ENCODE measurements at regions of chr5 and their contacts with region 1.

Region 1: DNA sequence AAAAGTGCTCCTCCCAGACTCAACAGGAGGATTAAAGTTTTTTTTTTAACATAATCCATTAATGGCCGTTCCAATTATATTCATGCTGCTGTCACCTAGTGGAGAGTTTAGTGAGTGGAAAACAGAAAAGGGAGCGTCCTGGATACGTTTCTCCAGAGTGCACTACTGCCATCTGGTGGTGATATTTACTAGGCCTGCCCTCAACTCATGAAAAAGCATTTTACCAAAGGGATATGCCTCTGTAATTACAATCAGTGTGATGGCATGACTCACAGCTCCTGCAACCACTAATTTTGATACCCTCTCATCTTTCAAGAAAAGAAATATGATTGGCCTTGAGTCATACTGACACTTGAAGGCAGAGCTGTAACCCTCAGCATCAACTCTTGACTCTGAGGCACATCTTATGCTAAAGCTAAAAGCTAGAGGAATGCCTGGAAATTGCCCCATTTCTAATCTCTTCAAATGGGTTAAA is 20.0 kb downstream of the MINAR2 start:
- DNase-seq: peak in 41 of 42 donors; percentile 24 to 93 (median 77)

Region 2: DNA sequence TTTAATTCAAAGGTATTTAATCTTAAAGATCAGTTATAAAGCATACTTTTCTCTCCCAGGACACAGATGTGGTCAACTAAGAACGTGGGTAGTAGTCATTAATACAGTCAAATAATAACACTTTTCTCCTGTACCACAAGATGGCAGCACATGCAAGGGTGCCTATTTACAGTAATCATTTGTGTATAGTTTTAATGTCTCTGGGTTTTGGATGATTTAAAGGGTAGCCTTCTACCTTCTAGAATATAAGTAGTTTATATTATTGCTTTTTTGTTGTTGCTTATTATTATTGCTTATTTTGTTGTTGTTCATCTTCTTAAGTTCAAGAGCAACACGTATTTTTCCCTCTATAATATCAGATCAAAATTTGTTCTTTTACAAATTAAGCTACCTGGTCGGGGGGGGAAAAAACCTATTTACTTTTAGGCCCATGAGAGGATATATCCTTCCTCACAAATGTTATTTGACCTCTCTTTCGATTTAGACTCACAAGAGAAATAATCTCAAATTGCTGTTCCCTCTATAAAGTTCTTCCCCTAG is 862.3 kb before region 1 on chr5:
- intact Hi-C with region 1: loop called (anchors 10 kb)
- DNase-seq: peak in 29 of 42 donors; percentile 5 to 74 (median 35)

Region 3: DNA sequence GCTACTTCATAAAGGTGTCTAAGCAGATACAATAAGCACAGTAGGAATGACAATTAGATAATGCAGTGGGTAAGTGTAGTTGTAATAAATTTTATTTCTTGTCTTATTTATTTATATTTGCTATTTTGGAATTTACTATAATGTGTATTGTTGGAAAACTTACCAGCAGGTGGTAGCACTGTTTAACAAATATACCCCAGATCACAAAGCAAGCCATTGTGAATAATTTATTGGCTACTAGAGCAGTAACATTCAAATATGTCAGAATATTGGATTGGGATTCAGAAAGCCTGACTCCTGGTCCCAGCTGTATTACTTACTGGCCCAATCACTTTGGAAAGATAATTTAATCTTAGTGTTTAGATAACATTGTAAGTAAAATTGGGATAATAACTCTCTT is 595.4 kb before region 1 on chr5:
- intact Hi-C with region 1: loop called (anchors 2 kb)
- DNase-seq: peak in 6 of 42 donors; percentile 3 to 62 (median 16)

Region 4: DNA sequence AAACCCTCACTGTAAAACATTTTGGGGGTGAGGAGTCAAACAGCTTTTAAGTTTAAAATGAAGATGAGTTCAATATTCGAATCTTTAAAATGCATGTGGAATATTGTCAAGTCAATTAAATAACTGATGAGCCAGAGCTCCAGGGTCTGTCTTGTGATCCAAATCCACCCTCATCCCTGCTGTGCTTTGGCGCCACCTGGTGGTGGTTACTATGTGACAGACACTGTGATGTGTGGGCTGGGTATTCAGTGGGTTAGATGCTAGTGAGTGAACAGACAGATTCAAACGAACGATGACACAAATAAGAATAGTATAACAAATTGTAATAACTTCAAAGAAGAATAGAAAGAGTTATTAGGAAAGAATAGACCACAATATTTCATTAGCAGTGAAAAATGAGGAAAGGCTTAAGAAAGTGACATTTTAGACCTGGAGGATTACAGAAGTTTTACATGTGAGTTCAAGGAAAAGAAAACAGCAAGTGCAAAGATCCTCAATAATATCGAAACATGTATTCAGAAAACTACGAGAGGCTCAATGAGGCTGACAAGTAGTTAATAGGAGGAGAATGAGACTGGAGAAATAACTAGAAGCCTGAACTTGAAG is 84.9 kb after region 1 on chr5:
- intact Hi-C with region 1: loop called (anchors 2 kb)
- DNase-seq: peak; percentile 56 to 97 (median 88)

Measured in head of caudate nucleus (tissue), 42 donors.